ENCODE measurements at regions of chr5 and their contacts with region 1.

Region 1: DNA sequence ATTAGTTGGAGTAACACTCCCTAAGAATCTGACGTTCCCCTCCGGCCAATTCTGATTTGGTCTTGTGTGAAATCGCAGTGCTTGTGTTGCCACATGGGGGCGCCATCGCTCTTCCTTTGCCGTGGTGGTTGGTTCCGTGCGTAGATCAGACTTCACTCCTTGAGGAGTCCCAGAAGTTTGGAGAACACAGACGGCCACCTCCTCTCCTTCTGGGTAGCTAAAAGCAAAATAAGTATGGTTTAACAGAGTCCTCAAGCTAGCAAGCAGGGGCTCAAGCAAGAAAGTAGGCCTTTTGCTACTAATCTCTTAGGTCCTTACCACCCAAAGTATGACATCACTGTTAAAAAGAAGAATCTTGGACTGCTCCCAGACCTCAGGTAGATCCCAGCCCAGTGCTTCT is 59.5 kb downstream of the HSPA4 start:
- H3K4me3 Mint-ChIP-seq: no peak overlapping the region
- H3K27ac Mint-ChIP-seq: no peak overlapping the region
- H3K4me1 Mint-ChIP-seq: peaks cover 6% of the 10 kb centered on the region
- H3K27me3 Mint-ChIP-seq: peaks cover 10% of the 10 kb centered on the region

Region 2: GRCh38 chr5:133154274-133155074 is 43.2 kb after region 1 on chr5:
- intact Hi-C with region 1: no loop called
- H3K4me3 Mint-ChIP-seq: no peak overlapping the region
- H3K27ac Mint-ChIP-seq: no peak overlapping the region
- H3K4me1 Mint-ChIP-seq: no peaks in the 10 kb centered on the region
- H3K27me3 Mint-ChIP-seq: no peaks in the 10 kb centered on the region

Region 3: DNA sequence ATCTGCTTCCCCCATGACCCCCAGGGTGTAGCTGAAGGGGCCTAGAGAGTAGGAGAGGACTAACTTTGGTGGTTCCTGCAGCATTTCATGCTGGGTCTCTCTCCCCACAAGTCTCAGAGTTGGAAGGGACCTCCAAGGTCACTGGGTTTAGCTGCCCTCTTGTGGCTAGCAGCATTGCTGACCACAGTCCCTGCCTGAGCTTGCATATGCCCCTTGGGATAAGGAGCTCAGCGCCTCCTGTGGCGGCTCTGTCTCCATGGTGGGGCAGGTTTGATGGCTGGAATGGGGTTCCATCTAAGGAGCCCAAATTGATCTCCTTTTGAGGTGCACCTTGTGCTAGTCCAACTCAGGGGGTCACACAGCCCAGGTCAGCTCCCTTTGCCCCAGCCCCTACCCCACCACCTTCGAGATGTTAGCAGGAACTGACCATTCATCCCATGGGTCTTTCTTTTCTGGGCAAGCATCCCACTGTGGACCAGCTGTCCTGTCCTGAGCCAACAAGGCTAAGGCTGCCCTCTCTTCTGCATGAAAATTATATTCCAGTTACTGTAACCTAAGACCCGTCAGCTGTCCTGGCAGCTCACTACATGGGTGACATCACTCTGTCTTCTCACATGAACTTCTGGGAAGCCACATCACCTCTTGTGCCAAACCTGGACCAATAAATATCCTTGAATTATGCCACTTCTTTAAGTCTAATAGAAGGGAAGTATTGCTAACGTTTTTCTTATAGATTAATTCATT is 136.8 kb after region 1 on chr5:
- intact Hi-C with region 1: loop called (anchors 5 kb)
- H3K4me3 Mint-ChIP-seq: no peak overlapping the region
- H3K27ac Mint-ChIP-seq: no peak overlapping the region
- H3K4me1 Mint-ChIP-seq: no peaks in the 10 kb centered on the region
- H3K27me3 Mint-ChIP-seq: no peaks in the 10 kb centered on the region

Region 4: GRCh38 chr5:133287500-133287899 is 176.2 kb after region 1 on chr5:
- intact Hi-C with region 1: loop called (anchors 1 kb)
- H3K4me3 Mint-ChIP-seq: no peak overlapping the region
- H3K27ac Mint-ChIP-seq: no peak overlapping the region
- H3K4me1 Mint-ChIP-seq: no peaks in the 10 kb centered on the region
- H3K27me3 Mint-ChIP-seq: no peaks in the 10 kb centered on the region

Region 5: GRCh38 chr5:133868946-133869518 is 757.7 kb after region 1 on chr5:
- intact Hi-C with region 1: loop called (anchors 5 kb)
- H3K4me3 Mint-ChIP-seq: no peak overlapping the region
- H3K27ac Mint-ChIP-seq: no peak overlapping the region
- H3K4me1 Mint-ChIP-seq: peaks cover 2% of the 10 kb centered on the region
- H3K27me3 Mint-ChIP-seq: peaks cover 14% of the 10 kb centered on the region

Region 6: GRCh38 chr5:133944263-133945185 is 833.2 kb after region 1 on chr5:
- intact Hi-C with region 1: loop called (anchors 5 kb)
- H3K4me3 Mint-ChIP-seq: no peak overlapping the region
- H3K27ac Mint-ChIP-seq: no peak overlapping the region
- H3K4me1 Mint-ChIP-seq: no peaks in the 10 kb centered on the region
- H3K27me3 Mint-ChIP-seq: peaks cover 8% of the 10 kb centered on the region

Measured in dendritic cell treated with granulocyte-macrophage colony-stimulating factor and Interleukin-4, amounts not matched to agents 40 ng/mL and 50 ng/mL, for 4 days (primary cell).